ENCODE measurements at regions of chr2 and their contacts with region 1.

Region 1: DNA sequence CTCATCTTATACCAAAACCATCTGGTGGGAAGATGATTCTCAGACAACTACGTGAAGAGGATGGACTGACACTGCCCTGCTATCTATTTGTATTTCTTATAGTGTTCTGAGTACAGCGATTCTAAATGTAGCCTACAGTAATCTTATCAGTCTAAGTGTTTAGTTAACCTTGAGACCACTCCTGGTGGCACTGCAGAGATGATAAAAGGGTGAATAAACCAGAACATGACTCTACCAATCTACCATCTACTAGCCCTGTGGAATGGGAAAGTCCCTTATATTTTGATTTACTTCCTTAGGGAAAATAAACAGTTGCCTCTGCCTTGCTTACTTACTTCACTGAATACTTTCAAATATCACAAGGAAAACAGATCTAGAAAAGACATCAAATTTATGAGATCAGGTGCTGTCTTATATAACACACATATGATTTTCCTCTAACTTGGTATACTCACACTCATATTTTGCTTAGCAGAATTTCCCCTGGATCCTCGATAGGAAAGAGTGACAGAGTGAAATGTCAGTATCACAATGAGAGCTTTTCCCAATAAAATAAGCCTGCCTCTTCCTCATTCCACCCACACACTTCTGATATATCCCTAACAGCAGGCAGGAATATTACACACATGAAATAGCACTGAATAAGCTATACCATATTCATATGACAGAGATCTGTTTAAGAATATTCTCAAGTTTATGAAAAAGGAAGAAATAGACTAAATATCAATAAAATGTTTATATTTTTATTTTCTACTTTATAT is 58.6 kb upstream of the MTIF2 start:
- DNase-seq: no peak
- ATAC-seq: peak in 1 of 4 donors; percentile 20
- H3K4me3 ChIP-seq: no peak overlapping the region
- H3K27ac ChIP-seq: no peak overlapping the region
- H3K4me1 ChIP-seq: no peaks in the 10 kb centered on the region
- H3K27me3 ChIP-seq: no peaks in the 10 kb centered on the region
- CTCF ChIP-seq: no peak
- POLR2A ChIP-seq: no peak

Region 2: GRCh38 chr2:55431982-55432627 is 104.5 kb after region 1 on chr2:
- intact Hi-C with region 1: loop called in 1 of 10 experiments (anchors 10 kb)
- DNase-seq: no peak
- ATAC-seq: peak in 1 of 4 donors; percentile 58
- H3K4me3 ChIP-seq: no peak overlapping the region
- H3K27ac ChIP-seq: no peak overlapping the region
- H3K4me1 ChIP-seq: peaks cover 0 to 4% (median 0%) of the 10 kb centered on the region in 12 donors
- H3K27me3 ChIP-seq: no peaks in the 10 kb centered on the region
- CTCF ChIP-seq: peak in 11 of 12 donors; percentile 35 to 72 (median 61)
- POLR2A ChIP-seq: no peak

Measured in heart left ventricle (tissue), 16 donors.